Activated CD4-positive, alpha-beta T cell treated with anti-CD3 and anti-CD28 coated beads, Interleukin-2, amount 10 ng/mL, durations not matched to agents 24 days and 14 days (primary cell): ENCODE measurements at regions of chr18 and their contacts with region 1.

Region 1: DNA sequence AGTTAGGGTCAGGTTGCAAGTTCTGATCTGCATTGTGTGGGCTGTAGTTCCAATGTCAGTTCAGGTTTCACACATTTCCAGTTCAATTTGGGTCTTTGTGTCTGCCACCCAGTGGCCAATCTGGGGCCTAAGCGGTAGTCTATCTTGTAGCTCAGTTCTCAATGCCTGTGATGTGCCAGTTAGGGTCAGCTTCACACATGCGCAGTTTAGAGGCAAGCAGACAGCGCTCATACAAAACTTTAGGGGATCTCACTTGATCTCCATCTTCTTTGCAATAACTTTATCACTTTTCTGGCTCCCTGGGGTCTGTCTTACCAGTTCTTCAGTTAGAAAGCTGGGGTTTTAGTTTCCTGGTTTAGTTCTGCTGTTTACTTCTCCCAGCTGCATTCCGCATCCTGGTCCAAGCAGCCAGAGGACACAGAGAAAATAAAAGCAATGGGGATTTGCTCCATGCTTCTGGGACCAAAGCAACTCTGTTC is 11.0 kb upstream of the ZNF24 start:
- DNase-seq: peak; percentile 85
- H3K4me3 Mint-ChIP-seq: no peak overlapping the region
- H3K27ac Mint-ChIP-seq: no peak overlapping the region
- H3K4me1 Mint-ChIP-seq: peaks cover 2% of the 10 kb centered on the region
- H3K27me3 Mint-ChIP-seq: peaks cover 2% of the 10 kb centered on the region

Region 2: GRCh38 chr18:35005963-35006577 is 349.1 kb before region 1 on chr18:
- intact Hi-C with region 1: loop called (anchors 2 kb)
- DNase-seq: peak; percentile 80
- H3K4me3 Mint-ChIP-seq: no peak overlapping the region
- H3K27ac Mint-ChIP-seq: no peak overlapping the region
- H3K4me1 Mint-ChIP-seq: no peaks in the 10 kb centered on the region
- H3K27me3 Mint-ChIP-seq: peaks cover 6% of the 10 kb centered on the region

Region 3: DNA sequence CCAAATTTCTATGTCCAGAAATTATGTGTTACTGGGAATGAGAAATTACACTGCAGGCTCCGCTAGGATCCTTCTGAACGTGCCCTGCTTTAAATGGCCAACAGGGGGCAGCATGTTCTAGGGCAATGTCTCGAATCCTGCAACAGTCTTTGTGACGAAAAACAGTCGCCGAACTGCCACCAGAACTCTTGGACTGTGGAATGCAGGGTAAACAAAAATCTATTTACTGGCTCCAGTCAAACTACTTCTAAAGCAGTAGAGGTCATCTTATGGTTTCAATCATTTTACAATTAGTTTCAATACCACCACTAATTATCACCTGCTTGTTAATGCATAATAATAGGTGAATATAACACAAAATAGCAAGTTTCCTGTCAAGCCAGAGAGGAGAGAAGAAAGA is 124.1 kb before region 1 on chr18:
- intact Hi-C with region 1: loop called (anchors 1 kb)
- DNase-seq: peak; percentile 93
- H3K4me3 Mint-ChIP-seq: peak overlapping the region; percentile 67
- H3K27ac Mint-ChIP-seq: no peak overlapping the region
- H3K4me1 Mint-ChIP-seq: peaks cover 3% of the 10 kb centered on the region
- H3K27me3 Mint-ChIP-seq: peaks cover 3% of the 10 kb centered on the region